GM12878 (cell line): ENCODE measurements at regions of chr6 and their contacts with region 1.

Region 1: DNA sequence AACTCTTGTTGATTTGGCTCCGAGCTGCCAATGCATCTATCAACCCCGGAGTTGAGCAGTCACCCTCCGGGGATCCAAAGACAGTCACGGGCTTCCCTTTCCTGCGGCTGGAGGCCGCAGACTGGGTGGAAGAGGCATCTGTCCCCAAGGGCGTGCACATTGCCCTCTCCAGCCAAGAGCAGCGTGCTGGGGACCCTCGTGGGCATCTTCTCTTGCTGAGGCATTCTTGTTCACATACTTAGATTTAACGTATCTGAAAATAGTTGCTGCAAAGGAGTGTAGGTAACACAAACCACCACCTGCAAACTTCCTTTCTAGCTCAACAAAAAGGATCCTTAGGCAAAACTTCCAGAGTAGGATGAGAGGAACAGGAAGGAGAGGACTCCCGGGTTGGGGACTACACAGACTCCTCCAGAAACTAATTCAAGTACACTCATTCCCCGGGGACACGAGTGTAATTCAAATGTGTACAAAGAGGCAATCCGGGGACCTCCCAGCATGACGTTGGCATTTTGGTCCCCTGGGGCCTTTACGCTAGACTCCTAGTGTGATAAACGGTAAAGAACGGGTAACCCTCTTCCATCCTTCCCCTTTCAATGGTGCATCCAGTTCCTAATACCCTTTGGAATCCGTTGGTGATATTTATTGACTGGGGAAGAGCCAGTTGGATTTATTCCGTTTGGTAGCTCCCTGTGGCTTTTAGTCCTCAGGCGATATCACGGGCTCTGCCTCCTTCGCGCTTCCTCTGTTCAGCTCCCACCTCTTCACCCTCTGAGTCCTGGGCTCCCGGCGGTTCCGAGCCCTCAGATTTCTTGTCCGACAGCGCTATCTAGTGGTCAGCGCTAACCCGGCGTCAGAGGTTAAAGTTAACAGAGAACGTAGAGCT is 2.7 kb upstream of the COL12A1 start:
- DNase-seq: peak; percentile 23
- ATAC-seq: peak; percentile 86
- H3K4me3 ChIP-seq: no peak overlapping the region
- H3K27ac ChIP-seq: no peak overlapping the region
- H3K4me1 ChIP-seq: no peaks in the 10 kb centered on the region
- H3K27me3 ChIP-seq: peaks cover 29% of the 10 kb centered on the region in 2 experiments
- CTCF ChIP-seq: peak; percentile 82 to 96 (median 92)
- EP300 ChIP-seq: no peak
- POLR2A ChIP-seq: no peak
- RAD21 ChIP-seq: peak; percentile 96

Region 2: DNA sequence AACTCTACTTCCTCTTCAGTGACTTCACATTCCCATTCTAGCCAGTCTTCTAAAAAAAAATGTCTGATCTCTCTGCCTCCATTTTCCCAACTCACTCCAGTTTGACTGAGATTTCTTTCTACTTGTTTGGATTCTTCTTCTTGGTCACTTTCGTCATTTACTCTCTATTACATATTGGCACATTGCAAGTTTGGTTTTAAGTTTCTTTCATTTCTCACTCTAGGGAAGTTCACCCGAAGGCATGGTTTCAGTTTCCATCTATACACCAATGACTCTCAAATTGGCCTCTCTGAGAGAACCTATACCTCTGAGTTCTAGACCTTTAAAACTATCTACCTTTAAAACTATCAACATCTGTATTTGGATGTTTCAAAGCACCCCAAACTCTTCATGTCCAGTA is 1461.3 kb before region 1 on chr6:
- CTCF ChIA-PET with region 1: interaction called, 28 read pairs
- POLR2A ChIA-PET with region 1: no interaction called
- RAD21 ChIA-PET with region 1: interaction called, 5 read pairs
- SMC1A ChIA-PET with region 1: interaction called, 4 read pairs
- in situ Hi-C with region 1: loop called (anchors 5 kb)
- intact Hi-C with region 1: no loop called
- DNase-seq: peak; percentile 51
- ATAC-seq: peak; percentile 96
- H3K4me3 ChIP-seq: no peak overlapping the region; the same call in 1 of the 2 replicates
- H3K27ac ChIP-seq: no peak overlapping the region
- H3K4me1 ChIP-seq: peaks cover 2% of the 10 kb centered on the region; the same call in 1 of the 2 replicates
- H3K27me3 ChIP-seq: no peaks in the 10 kb centered on the region
- CTCF ChIP-seq: no peak
- EP300 ChIP-seq: no peak
- POLR2A ChIP-seq: no peak
- RAD21 ChIP-seq: no peak

Region 3: DNA sequence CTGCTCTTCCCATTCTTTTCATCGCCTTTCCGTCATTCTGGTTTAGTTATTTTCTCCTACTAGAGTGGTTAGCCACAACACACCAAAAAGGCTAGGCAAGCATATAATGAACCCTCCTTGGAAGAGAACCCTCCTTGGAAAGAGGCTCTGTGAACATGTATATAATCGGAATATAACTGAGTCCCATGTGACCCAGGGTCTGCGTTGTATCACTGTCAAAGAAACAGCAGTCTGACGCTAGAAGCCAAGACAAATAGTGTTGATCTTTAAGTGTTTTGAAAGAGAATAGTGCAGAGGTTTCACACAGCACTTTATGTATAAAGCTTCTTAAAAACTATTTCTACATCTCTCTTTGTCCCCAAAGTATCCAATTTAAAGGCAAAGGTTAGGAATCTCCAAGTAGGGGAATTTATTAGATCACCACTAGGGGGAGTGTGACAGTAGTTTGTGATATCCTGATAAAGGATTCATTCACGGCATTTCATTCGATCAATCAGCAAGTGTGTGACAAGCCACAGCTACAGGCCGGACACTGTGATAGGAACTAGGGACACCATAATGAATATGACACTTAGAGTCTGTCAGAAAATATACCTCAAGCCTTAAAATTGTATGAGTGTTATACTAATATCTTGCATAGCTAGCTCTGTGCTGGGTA is 1117.3 kb before region 1 on chr6:
- CTCF ChIA-PET with region 1: interaction called, 95 read pairs
- POLR2A ChIA-PET with region 1: no interaction called
- RAD21 ChIA-PET with region 1: interaction called, 10 read pairs
- SMC1A ChIA-PET with region 1: interaction called, 49 read pairs
- in situ Hi-C with region 1: loop called (anchors 5 kb)
- intact Hi-C with region 1: loop called (anchors 1 kb)
- DNase-seq: no peak
- ATAC-seq: peak; percentile 73
- H3K4me3 ChIP-seq: no peak overlapping the region
- H3K27ac ChIP-seq: no peak overlapping the region
- H3K4me1 ChIP-seq: no peaks in the 10 kb centered on the region
- H3K27me3 ChIP-seq: no peaks in the 10 kb centered on the region
- CTCF ChIP-seq: peak; percentile 47 to 70 (median 56); a peak in 5 of 6 replicates
- EP300 ChIP-seq: no peak
- POLR2A ChIP-seq: no peak
- RAD21 ChIP-seq: peak; percentile 42

Region 4: DNA sequence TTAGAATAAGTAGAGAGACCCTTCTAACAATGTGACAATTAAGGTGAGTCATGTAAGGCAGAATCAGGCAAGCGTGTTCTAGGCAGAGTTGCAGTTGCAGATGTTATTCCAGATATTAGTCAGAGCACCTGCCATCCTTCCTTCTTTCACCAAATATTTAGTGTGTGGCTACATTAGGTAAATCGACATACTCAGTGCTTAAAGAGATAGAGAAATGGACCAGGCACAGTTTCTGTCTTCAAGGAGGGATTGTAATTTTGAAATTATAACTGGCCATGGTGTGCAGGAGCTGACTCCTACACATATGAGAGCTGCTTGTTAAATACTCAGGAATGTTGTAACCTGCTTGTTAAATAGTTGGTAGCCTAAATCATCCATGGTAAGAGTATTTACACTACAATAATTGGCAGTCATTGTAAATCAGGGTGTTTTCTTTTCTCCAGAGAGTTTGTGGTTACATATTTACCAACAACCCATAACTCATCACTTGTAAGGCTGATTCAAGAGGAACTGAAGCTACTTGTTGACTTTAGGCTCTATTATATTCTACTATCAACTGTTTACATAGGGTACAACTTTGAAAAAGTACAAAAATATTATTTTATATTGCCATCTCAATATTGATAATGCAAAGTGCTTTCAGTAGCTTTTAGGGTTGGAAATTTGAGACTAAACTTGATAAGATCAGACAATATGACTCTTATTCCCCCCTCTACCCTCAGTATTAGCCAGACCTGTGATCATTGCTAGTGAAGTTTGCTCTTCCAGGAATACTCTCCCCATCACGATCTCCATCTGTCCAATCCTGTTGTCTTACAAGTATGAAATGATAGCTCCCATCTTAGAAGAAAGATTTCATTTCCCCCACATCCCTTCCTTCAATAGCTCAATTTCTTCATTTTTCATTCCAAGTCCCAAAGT is 609.8 kb before region 1 on chr6:
- CTCF ChIA-PET with region 1: interaction called, 3 read pairs
- POLR2A ChIA-PET with region 1: no interaction called
- RAD21 ChIA-PET with region 1: no interaction called
- SMC1A ChIA-PET with region 1: no interaction called
- in situ Hi-C with region 1: no loop called
- intact Hi-C with region 1: loop called (anchors 5 kb)
- DNase-seq: peak; percentile 81
- ATAC-seq: peak; percentile 94
- H3K4me3 ChIP-seq: peak overlapping the region; percentile 28; the same call in 1 of the 2 replicates
- H3K27ac ChIP-seq: peak overlapping the region; percentile 60
- H3K4me1 ChIP-seq: peaks cover 17% of the 10 kb centered on the region
- H3K27me3 ChIP-seq: no peaks in the 10 kb centered on the region
- CTCF ChIP-seq: no peak
- EP300 ChIP-seq: peak; percentile 96 to 98
- POLR2A ChIP-seq: no peak
- RAD21 ChIP-seq: 0 out of 2 replicates have a peak, but pooled peaks have one; percentile 12

Region 5: GRCh38 chr6:75223428-75223827 is 14.9 kb after region 1 on chr6:
- CTCF ChIA-PET with region 1: interaction called, 52 read pairs
- POLR2A ChIA-PET with region 1: no interaction called
- RAD21 ChIA-PET with region 1: interaction called, 8 read pairs
- SMC1A ChIA-PET with region 1: interaction called, 12 read pairs
- in situ Hi-C with region 1: no loop called
- intact Hi-C with region 1: no loop called
- DNase-seq: no peak
- ATAC-seq: no peak
- H3K4me3 ChIP-seq: no peak overlapping the region
- H3K27ac ChIP-seq: no peak overlapping the region
- H3K4me1 ChIP-seq: no peaks in the 10 kb centered on the region
- H3K27me3 ChIP-seq: no peaks in the 10 kb centered on the region
- CTCF ChIP-seq: no peak
- EP300 ChIP-seq: no peak
- POLR2A ChIP-seq: no peak
- RAD21 ChIP-seq: no peak

Region 6: DNA sequence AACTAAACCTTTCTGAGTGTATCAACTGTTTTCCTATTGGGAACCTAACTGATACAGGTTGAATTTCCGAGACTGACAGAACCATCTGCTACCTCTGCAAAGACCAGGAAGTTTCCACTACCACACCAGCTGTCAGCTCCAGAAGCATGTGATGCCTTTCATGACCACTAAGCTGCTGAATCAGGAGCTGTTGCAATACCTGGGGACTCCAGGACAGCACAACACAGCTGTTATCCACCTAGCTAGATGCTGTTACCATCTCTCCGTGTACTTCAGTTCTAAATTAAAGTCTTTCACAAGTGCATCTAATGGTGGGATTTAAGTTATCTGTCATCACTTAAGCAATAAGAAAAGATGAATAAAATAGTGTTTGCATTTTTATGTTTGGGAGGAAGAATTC is 1022.2 kb after region 1 on chr6:
- CTCF ChIA-PET with region 1: no interaction called
- POLR2A ChIA-PET with region 1: no interaction called
- RAD21 ChIA-PET with region 1: no interaction called
- SMC1A ChIA-PET with region 1: no interaction called
- in situ Hi-C with region 1: no loop called
- intact Hi-C with region 1: no loop called
- DNase-seq: no peak
- ATAC-seq: peak; percentile 51; the same call in 2 of the 3 replicates
- H3K4me3 ChIP-seq: no peak overlapping the region
- H3K27ac ChIP-seq: no peak overlapping the region
- H3K4me1 ChIP-seq: no peaks in the 10 kb centered on the region
- H3K27me3 ChIP-seq: no peaks in the 10 kb centered on the region
- CTCF ChIP-seq: no peak
- EP300 ChIP-seq: no peak
- POLR2A ChIP-seq: no peak
- RAD21 ChIP-seq: no peak